Thyroid gland (tissue), 4 donors: ENCODE measurements at regions of chr11 and their contacts with region 1.

Region 1: GRCh38 chr11:118198370-118198769 is 21.9 kb upstream of the SCN2B start:
- DNase-seq: peak; percentile 78 to 80
- H3K4me3 ChIP-seq: no peak overlapping the region
- H3K27ac ChIP-seq: no peak overlapping the region
- H3K4me1 ChIP-seq: peaks cover 0 to 8% of the 10 kb centered on the region in 2 donors
- H3K27me3 ChIP-seq: no peaks in the 10 kb centered on the region
- CTCF ChIP-seq: peak; percentile 50 to 94 (median 82)
- POLR2A ChIP-seq: no peak

Region 2: GRCh38 chr11:118290923-118291322 is 92.6 kb after region 1 on chr11:
- intact Hi-C with region 1: loop called (anchors 1 kb)
- DNase-seq: peak; percentile 37 to 46
- H3K4me3 ChIP-seq: no peak overlapping the region
- H3K27ac ChIP-seq: no peak overlapping the region
- H3K4me1 ChIP-seq: no peaks in the 10 kb centered on the region
- H3K27me3 ChIP-seq: no peaks in the 10 kb centered on the region
- CTCF ChIP-seq: peak in 5 of 6 experiments; percentile 11 to 81 (median 73)
- POLR2A ChIP-seq: no peak

Region 3: GRCh38 chr11:118792570-118793124 is 594.3 kb after region 1 on chr11:
- intact Hi-C with region 1: no loop called
- DNase-seq: peak; percentile 76
- H3K4me3 ChIP-seq: peak overlapping the region in 2 of 3 donors; percentile 82 to 86
- H3K27ac ChIP-seq: peak overlapping the region; percentile 99 to 100 (median 100)
- H3K4me1 ChIP-seq: peaks cover 15 to 22% of the 10 kb centered on the region in 2 donors
- H3K27me3 ChIP-seq: no peaks in the 10 kb centered on the region
- CTCF ChIP-seq: no peak
- POLR2A ChIP-seq: peak; percentile 51 to 93